ENCODE measurements at regions of chr18 and their contacts with region 1.

Region 1: GRCh38 chr18:25230658-25231326 is 121.2 kb downstream of the ZNF521 start:
- DNase-seq: peak; percentile 72 to 85 (median 79)
- ATAC-seq: peak; percentile 75 to 92 (median 87)
- H3K4me3 ChIP-seq: peak overlapping the region in 3 of 12 donors; percentile 2 to 27 (median 3)
- H3K27ac ChIP-seq: peak overlapping the region; percentile 43 to 74 (median 64)
- H3K4me1 ChIP-seq: peaks cover 6 to 73% (median 46%) of the 10 kb centered on the region in 12 donors
- H3K27me3 ChIP-seq: no peaks in the 10 kb centered on the region
- CTCF ChIP-seq: no peak
- POLR2A ChIP-seq: no peak

Region 2: GRCh38 chr18:24987303-24988252 is 243.2 kb before region 1 on chr18:
- intact Hi-C with region 1: loop called in 1 of 10 experiments (anchors 10 kb)
- DNase-seq: peak in 3 of 5 donors; percentile 25 to 59 (median 41)
- ATAC-seq: peak; percentile 70 to 83 (median 74)
- H3K4me3 ChIP-seq: peak overlapping the region in 7 of 12 donors; percentile 13 to 42 (median 26)
- H3K27ac ChIP-seq: peak overlapping the region; percentile 6 to 73 (median 55)
- H3K4me1 ChIP-seq: peaks cover 0 to 34% (median 9%) of the 10 kb centered on the region in 12 donors
- H3K27me3 ChIP-seq: no peaks in the 10 kb centered on the region
- CTCF ChIP-seq: no peak
- POLR2A ChIP-seq: no peak

Region 3: DNA sequence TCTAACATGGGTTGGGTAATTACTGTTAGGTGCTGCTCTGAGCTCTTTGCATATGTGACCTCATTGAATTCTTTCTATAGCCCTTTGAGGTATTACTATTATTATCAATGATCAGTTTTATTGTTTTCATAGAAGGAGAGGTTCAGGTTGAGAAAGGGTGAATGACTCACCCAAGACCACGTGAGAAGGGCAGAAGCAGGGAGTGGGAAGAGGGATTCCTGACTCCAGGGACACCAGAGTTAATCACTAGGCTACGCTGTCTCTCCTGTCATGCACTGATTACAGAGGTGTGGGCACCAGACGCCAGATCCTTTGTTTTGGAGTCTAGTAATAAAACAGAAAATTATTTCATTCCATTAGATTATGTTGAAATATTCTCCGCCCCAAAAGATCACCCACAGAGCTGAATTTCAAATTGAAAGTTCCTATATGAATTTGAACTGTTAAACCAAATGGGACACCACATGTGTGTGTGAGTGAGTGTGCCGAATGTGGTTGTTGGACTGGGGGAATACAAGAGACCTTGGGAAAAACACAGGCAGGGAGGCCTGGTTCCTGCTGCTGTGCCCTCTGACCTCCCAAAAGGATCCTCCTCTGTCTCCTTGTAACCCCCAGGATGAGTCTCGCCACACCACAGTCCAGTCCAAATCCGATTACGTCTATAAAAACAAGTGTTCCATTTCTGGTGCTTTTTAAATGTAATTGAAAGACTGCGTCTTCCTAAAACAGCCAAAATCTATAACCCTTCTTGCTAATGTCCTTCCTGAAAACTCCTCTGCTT is 94.2 kb before region 1 on chr18:
- intact Hi-C with region 1: loop called in 1 of 10 experiments (anchors 5 kb)
- DNase-seq: peak in 3 of 5 donors; percentile 21 to 48 (median 23)
- ATAC-seq: peak; percentile 84 to 90 (median 88)
- H3K4me3 ChIP-seq: no peak overlapping the region
- H3K27ac ChIP-seq: peak overlapping the region; percentile 47 to 84 (median 67)
- H3K4me1 ChIP-seq: peaks cover 5 to 63% (median 44%) of the 10 kb centered on the region in 12 donors
- H3K27me3 ChIP-seq: no peaks in the 10 kb centered on the region
- CTCF ChIP-seq: peak in 1 of 12 donors; percentile 8
- POLR2A ChIP-seq: no peak

Region 4: DNA sequence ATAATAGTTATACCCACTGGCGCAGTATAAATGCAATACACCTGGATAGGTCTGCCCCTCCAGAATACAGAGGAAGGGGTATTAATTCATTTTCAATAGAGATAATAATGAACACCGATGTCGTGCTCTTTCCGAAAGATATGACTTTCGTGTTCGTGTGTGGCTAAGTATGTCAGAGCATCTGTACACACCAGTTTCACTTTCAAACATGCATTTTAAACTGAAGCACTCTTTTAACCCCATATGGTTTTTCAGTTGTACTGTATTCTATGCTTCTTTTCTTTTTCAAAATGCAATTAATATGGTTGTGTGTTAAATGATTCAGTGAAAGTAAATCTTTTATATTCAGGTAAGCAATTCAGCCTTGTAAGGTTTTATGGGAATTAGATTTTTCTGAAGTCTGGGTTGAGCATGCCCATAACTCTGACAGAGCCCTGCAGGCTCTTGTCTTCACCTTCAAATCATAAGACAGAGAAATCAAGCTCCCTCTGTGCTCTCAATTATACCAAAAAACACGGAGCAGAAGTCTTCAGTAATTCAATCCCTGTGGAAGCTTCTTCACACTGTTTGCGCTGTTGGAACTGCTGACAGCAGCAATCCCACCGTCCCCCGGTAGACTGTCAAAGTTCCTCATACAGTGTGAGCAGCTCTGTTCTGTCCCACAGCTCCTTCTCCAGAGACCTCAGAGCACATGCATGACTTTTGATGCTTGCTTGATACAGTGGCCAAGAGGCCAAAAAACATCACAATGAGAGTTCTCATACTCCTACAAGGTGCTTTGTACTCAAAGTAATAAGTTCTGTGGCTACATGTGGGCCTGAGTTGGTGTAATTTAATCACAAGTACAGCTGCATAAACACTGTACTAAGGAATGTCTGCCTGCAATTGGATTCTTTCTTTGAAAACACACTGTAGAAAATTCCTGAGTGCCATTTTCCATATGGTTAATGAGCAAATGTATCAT is 65.7 kb before region 1 on chr18:
- intact Hi-C with region 1: loop called in 2 of 10 experiments (anchors 5 to 10 kb)
- DNase-seq: peak; percentile 19 to 46 (median 29)
- ATAC-seq: peak; percentile 72 to 82 (median 80)
- H3K4me3 ChIP-seq: peak overlapping the region; percentile 10 to 60 (median 44)
- H3K27ac ChIP-seq: peak overlapping the region in 8 of 12 donors; percentile 17 to 61 (median 44)
- H3K4me1 ChIP-seq: peaks cover 0 to 29% (median 17%) of the 10 kb centered on the region in 12 donors
- H3K27me3 ChIP-seq: no peaks in the 10 kb centered on the region
- CTCF ChIP-seq: peak in 2 of 12 donors; percentile 13 to 16
- POLR2A ChIP-seq: no peak

Measured in heart left ventricle (tissue), 16 donors.